WTC11 (cell line): ENCODE measurements at regions of chr14 and their contacts with region 1.

Region 1: GRCh38 chr14:22570132-22570949 is 18.7 kb downstream of the DAD1 start:
- DNase-seq: peak; percentile 84
- ATAC-seq: peak; percentile 99
- H3K4me3 Mint-ChIP-seq: no peak overlapping the region
- H3K27ac Mint-ChIP-seq: peak overlapping the region; percentile 99
- H3K4me1 Mint-ChIP-seq: peaks cover 17% of the 10 kb centered on the region
- H3K27me3 Mint-ChIP-seq: no peaks in the 10 kb centered on the region
- CTCF ChIP-seq: peak; percentile 93

Region 2: DNA sequence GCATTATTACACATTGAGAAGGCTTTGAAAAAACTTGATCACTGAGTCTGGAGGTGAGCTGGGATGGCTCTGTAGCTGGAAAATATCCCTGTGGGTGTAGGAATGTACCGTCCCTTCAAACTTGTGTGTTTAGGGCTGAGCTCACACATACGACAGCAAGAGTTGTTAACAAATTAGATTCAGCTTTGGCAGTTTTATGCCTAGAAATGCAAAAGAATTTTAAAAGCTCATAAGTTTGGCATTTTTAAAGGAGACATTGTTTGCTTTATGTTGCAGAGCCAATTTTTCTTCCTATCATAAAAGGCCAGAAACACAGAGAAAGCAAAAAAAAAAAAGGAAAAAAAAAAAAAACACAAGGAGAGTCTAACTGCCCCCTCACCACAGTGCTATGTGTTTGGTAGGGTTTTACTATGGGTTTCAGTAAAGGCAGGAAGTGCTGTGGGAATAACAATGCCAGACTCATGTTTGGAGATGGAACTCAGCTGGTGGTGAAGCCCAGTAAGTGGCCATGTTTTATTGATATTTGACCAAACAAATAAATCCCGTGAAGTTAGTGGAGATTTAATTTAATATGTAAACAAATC is 59.7 kb before region 1 on chr14:
- CTCF ChIA-PET with region 1: interaction called, 11 read pairs
- POLR2A ChIA-PET with region 1: no interaction called
- DNase-seq: no peak
- ATAC-seq: peak; percentile 55
- H3K4me3 Mint-ChIP-seq: no peak overlapping the region
- H3K27ac Mint-ChIP-seq: no peak overlapping the region
- H3K4me1 Mint-ChIP-seq: peaks cover 45% of the 10 kb centered on the region
- H3K27me3 Mint-ChIP-seq: no peaks in the 10 kb centered on the region
- CTCF ChIP-seq: no peak

Region 3: GRCh38 chr14:22589096-22589839 is 18.9 kb after region 1 on chr14 and contains the start of gene DAD1:
- CTCF ChIA-PET with region 1: interaction called, 117 read pairs
- POLR2A ChIA-PET with region 1: interaction called, 7 read pairs
- DNase-seq: peak; percentile 99
- ATAC-seq: peak; percentile 92
- H3K4me3 Mint-ChIP-seq: peak within 1 kb of the TSS; percentile 98
- H3K27ac Mint-ChIP-seq: peak within 1 kb of the TSS; percentile 99
- H3K4me1 Mint-ChIP-seq: peaks cover 45% of the 10 kb centered on the region
- H3K27me3 Mint-ChIP-seq: peaks cover 3% of the 10 kb centered on the region; the same call in 1 of the 2 replicates
- CTCF ChIP-seq: no peak
- total RNA-seq, gene DAD1: 125 to 156 TPM (median 144 TPM) in 3 replicates

Region 4: DNA sequence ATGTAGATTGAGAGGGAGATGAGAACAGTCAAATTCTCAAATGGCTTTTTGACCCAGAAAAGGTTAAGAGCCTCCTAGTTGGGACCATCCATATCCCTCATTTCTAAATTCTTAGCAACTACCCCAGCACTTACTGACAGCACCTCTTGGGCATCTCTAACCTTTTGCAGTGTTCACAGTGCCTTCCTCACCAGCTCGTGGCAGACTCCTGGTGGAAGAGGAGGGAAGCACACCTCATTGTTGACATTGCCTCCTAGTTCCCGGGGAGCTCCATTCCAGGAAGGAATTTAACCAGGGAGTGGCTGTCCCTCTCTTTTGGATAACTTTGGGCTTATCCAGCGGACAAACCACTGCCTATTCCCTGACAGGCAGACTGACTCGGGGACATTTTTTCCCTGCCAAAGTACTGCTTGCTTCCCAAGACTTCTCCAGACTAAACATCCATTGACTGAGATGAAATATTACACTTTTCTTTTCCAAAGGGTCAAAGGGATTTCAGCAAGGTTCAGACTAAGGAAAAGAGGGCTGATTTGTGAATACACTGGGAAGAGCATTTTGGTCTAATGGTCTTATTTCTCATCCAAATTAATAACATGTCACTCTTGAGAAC is 82.8 kb after region 1 on chr14:
- CTCF ChIA-PET with region 1: interaction called, 90 read pairs
- POLR2A ChIA-PET with region 1: interaction called, 3 read pairs
- DNase-seq: peak; percentile 86
- ATAC-seq: peak; percentile 99
- H3K4me3 Mint-ChIP-seq: no peak overlapping the region
- H3K27ac Mint-ChIP-seq: no peak overlapping the region
- H3K4me1 Mint-ChIP-seq: 0 out of 2 replicates have a peak, but pooled peaks cover 3% of the 10 kb centered on the region
- H3K27me3 Mint-ChIP-seq: no peaks in the 10 kb centered on the region; the same call in 1 of the 2 replicates
- CTCF ChIP-seq: peak; percentile 68

Region 5: GRCh38 chr14:22678221-22678620 is 107.9 kb after region 1 on chr14:
- CTCF ChIA-PET with region 1: no interaction called
- POLR2A ChIA-PET with region 1: no interaction called
- DNase-seq: no peak
- ATAC-seq: no peak
- H3K4me3 Mint-ChIP-seq: no peak overlapping the region
- H3K27ac Mint-ChIP-seq: no peak overlapping the region
- H3K4me1 Mint-ChIP-seq: peaks cover 9% of the 10 kb centered on the region; the same call in 1 of the 2 replicates
- H3K27me3 Mint-ChIP-seq: peaks cover 50% of the 10 kb centered on the region
- CTCF ChIP-seq: no peak

Region 6: DNA sequence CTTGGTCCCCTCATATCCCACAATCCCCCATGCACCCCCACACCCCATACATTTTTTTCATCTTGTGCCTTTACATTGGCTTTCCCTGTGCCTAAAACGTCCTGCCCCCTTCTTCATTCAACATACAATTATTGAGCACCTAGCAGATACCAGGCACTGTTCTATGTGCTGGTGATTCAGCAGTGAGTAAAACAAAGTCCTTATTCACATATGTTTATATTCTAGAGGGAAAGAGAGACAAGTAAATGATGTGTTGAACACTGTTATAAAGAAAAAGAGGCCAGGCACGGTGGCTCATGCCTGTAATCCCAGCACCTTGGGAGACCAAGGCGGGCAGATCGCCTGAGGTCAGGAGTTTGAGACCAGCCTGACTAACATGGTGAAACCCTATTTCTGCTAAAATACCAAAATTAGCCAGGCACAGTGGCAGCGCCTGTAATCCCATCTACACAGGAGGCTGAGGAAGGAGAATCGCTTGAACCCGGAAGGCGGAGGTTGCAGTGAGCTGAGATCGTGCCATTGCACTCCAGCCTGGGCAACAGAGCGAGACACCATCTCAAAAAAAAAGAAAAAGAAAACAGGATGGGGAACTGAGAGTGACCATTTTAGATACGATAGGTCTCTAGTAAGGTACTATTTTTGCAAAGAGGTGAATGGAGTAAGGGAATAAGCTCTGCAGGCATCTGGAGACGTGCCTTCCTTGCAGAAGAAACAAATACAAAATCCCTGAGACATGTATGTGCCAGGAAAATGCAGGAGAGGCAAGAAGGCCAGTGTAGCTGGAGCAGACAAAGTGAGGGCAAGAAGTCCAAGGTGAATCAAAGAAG is 232.7 kb after region 1 on chr14:
- CTCF ChIA-PET with region 1: interaction called, 11 read pairs
- POLR2A ChIA-PET with region 1: no interaction called
- DNase-seq: no peak
- ATAC-seq: no peak
- H3K4me3 Mint-ChIP-seq: no peak overlapping the region
- H3K27ac Mint-ChIP-seq: no peak overlapping the region
- H3K4me1 Mint-ChIP-seq: peaks cover 8% of the 10 kb centered on the region
- H3K27me3 Mint-ChIP-seq: no peaks in the 10 kb centered on the region
- CTCF ChIP-seq: no peak

Region 7: DNA sequence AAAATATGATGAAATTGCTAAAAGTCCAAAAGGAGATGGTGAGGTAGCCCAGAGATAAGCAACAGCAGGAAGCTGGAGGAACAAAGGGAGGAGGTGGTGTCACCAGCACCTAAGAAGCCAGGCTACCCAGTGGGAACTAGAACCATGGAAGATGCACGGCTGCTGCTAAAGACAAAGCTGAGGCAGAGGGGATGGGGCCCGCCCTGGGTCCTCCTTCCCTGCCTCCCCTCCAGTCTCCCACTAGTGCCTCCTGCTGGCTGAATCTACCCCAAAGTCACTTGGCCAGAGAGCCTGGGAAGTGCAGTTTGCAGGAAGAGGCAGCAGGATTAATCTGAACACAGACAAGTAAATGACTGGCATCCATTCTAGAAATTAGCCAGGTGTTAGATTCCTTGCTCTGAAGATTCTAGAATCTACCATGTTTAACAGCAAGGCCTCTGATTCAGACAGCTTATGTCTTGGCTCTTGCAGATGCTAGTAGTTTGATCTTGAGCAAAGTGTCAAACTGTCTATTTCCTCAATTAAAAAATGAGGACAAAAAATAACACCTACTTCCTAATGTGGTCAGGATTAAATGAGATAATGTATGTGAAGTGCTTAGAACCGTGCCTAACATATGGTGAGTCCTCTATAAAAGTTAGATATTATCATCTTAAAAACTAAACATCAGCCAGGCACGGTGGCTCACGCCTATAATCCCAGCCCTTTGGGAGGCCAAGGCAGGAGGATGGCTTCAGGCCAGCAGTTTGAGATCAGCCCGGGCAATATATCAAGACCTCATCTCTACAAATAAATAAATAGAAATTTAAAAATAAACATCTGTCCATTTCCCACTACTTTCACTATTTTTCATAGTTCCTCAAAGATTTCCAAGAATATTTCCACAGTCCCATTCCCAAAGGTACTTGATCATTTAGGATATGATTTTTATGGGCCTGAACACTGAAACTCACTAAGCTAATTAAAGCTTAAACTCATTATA is 295.4 kb after region 1 on chr14:
- CTCF ChIA-PET with region 1: interaction called, 14 read pairs
- POLR2A ChIA-PET with region 1: no interaction called
- DNase-seq: peak; percentile 84
- ATAC-seq: peak; percentile 96
- H3K4me3 Mint-ChIP-seq: no peak overlapping the region
- H3K27ac Mint-ChIP-seq: peak overlapping the region; percentile 31; the same call in 1 of the 2 replicates
- H3K4me1 Mint-ChIP-seq: peaks cover 13% of the 10 kb centered on the region
- H3K27me3 Mint-ChIP-seq: no peaks in the 10 kb centered on the region
- CTCF ChIP-seq: peak; percentile 47

Region 8: DNA sequence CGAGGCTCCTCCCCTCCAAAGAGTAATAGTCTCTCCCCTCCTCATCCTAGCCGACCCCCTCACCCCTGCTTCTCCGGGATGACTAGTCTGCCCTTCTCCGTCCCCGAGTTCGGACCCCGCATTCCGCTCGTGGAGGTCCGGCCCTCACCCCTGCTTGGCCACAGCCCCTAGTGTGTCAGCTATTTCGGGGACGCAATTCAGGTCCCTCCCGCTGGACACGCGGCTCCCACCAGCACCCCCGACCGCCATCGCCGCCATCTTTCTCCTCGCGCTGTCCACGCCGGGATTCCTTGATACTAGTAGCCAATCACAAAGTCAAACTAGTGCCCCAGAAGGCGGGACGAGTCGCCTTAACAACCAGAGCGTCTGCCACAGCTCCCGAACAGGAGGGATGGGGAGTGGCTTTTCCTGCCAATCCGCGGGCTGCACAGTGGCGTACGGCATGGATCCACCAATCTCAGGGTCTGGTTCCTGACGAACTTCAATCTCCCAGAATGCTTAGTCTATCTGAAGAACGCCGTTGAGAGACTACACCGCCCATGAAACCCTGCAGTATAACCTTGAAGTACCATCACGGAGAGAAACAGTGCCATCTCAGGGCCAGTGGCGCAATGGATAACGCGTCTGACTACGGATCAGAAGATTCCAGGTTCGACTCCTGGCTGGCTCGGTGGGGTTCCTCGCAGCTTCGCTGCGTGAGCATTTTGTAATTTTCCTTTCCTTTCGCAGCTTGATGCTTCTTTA is 358.9 kb after region 1 on chr14 and contains the start of gene PRMT5:
- CTCF ChIA-PET with region 1: interaction called, 11 read pairs
- POLR2A ChIA-PET with region 1: no interaction called
- DNase-seq: peak; percentile 97
- ATAC-seq: peak; percentile 96
- H3K4me3 Mint-ChIP-seq: no peak within 1 kb of the TSS
- H3K27ac Mint-ChIP-seq: no peak within 1 kb of the TSS; the same call in 1 of the 2 replicates
- H3K4me1 Mint-ChIP-seq: peaks cover 7% of the 10 kb centered on the region
- H3K27me3 Mint-ChIP-seq: no peaks in the 10 kb centered on the region
- CTCF ChIP-seq: no peak
- total RNA-seq, gene PRMT5: 119 to 124 TPM (median 123 TPM) in 3 replicates